CD14-positive monocyte (primary cell): ENCODE measurements at regions of chr7 and their contacts with region 1.

Region 1: GRCh38 chr7:143321734-143322133 is 5.8 kb downstream of the CLCN1 start:
- DNase-seq: peak; percentile 38 to 66 (median 63)
- H3K4me3 ChIP-seq: no peak overlapping the region
- H3K4me3 Mint-ChIP-seq: no peak overlapping the region
- H3K27ac ChIP-seq: no peak overlapping the region
- H3K27ac Mint-ChIP-seq: no peak overlapping the region
- H3K4me1 ChIP-seq: peaks cover 34 to 37% of the 10 kb centered on the region in 2 donors
- H3K4me1 Mint-ChIP-seq: peaks cover 51% of the 10 kb centered on the region
- H3K27me3 ChIP-seq: no peaks in the 10 kb centered on the region
- H3K27me3 Mint-ChIP-seq: peaks cover 0 to 12% (median 5%) of the 10 kb centered on the region in 3 donors
- CTCF ChIP-seq: peak; percentile 31

Region 2: DNA sequence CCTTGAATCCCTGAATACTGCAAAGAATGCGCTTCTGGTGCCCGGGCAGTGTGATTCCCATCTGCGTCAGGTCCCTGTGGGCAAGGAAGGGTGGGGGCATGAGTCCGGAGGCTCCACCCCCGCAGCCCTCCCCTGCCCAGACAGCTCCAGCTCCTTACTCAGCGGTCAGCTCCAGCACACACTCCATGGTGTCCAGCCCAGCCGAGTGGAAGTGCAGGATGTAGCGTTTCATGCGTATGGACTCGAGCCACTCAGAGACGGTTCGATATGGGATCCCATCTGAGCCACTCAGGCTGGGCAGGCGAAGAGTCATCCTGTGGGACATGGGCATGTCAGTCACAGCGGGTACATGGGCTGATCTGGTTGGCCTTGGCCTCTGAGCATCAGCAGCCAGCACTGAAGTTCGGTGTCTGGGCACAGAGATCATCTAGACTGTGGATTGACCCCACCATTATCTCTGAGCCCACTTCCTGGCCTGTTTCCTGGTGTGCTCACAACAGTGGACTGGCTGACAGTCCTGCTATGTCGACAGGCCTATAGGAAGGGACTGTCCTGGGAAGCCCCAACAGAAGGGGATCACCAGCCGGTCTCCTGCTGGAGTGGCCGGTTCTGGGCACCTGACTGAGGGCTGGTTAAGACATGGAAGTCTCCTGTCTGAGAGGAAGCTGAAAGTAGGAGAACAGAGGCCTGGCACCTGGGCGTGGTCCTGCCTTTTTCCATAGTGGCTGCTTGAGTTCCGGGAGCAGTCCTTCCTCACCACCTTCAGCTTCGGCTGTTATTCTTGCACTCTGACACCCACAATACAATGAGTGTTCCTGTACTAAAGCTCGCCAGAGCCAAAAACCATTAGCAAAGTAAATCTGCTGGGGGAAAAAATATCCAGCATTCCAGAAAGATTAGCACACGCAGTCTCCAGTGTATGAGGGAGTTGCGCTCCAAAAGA is 70.0 kb after region 1 on chr7:
- intact Hi-C with region 1: no loop called
- DNase-seq: no peak
- H3K4me3 ChIP-seq: no peak overlapping the region
- H3K4me3 Mint-ChIP-seq: no peak overlapping the region
- H3K27ac ChIP-seq: peak overlapping the region; percentile 13 to 47
- H3K27ac Mint-ChIP-seq: peak overlapping the region in 4 of 7 donors; percentile 26 to 79 (median 60)
- H3K4me1 ChIP-seq: peaks cover 36 to 73% of the 10 kb centered on the region in 2 donors
- H3K4me1 Mint-ChIP-seq: peaks cover 65% of the 10 kb centered on the region
- H3K27me3 ChIP-seq: no peaks in the 10 kb centered on the region
- H3K27me3 Mint-ChIP-seq: no peaks in the 10 kb centered on the region
- CTCF ChIP-seq: no peak

Region 3: GRCh38 chr7:143408686-143409561 is 87.2 kb after region 1 on chr7 and contains the start of gene EPHA1:
- intact Hi-C with region 1: loop called (anchors 10 kb)
- DNase-seq: peak in 2 of 3 donors; percentile 26 to 33
- H3K4me3 ChIP-seq: peak within 1 kb of the TSS; percentile 17 to 73 (median 37)
- H3K4me3 Mint-ChIP-seq: peak within 1 kb of the TSS; percentile 75 to 88
- H3K27ac ChIP-seq: peak within 1 kb of the TSS in 1 of 2 donors; percentile 80
- H3K27ac Mint-ChIP-seq: peak within 1 kb of the TSS; percentile 70 to 96 (median 88)
- H3K4me1 ChIP-seq: peaks cover 63 to 65% of the 10 kb centered on the region in 2 donors
- H3K4me1 Mint-ChIP-seq: peaks cover 68% of the 10 kb centered on the region
- H3K27me3 ChIP-seq: no peaks in the 10 kb centered on the region
- H3K27me3 Mint-ChIP-seq: peaks cover 0 to 3% (median 0%) of the 10 kb centered on the region in 3 donors
- CTCF ChIP-seq: peak; percentile 35
- polyA plus RNA-seq, gene EPHA1: 0.50 to 0.95 TPM in 2 of 3 donors, not detected in the other